ENCODE measurements at regions of chr9 and their contacts with region 1.

Region 1: DNA sequence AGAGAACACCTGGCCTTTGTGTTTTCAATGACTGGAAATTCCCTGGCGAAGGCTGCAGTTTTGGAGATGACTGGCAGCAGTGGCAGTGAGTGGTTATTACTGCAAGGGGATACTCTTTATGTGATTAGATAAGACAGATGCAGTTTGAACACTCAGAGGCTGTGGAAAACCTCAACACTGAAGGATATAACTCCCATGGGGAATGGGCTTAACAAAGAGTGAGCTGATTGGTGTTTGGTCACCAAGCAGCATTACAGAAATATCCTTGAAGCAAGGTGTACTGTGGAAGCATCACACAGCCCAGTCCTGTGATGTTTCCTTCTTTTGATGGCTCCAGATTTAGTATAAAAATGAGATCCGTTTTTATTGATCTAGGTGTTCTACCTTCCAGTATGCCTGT is 490.7 kb upstream of the PTPRD start:
- DNase-seq: no peak
- ATAC-seq: no peak
- H3K4me3 ChIP-seq: no peak overlapping the region
- H3K27ac ChIP-seq: no peak overlapping the region
- H3K4me1 ChIP-seq: no peaks in the 10 kb centered on the region
- H3K27me3 ChIP-seq: no peaks in the 10 kb centered on the region

Region 2: GRCh38 chr9:11092974-11093373 is 10.6 kb before region 1 on chr9:
- intact Hi-C with region 1: loop called in 1 of 2 experiments (anchors 1 kb)
- DNase-seq: no peak
- ATAC-seq: no peak
- H3K4me3 ChIP-seq: no peak overlapping the region
- H3K27ac ChIP-seq: no peak overlapping the region
- H3K4me1 ChIP-seq: no peaks in the 10 kb centered on the region
- H3K27me3 ChIP-seq: no peaks in the 10 kb centered on the region

Region 3: DNA sequence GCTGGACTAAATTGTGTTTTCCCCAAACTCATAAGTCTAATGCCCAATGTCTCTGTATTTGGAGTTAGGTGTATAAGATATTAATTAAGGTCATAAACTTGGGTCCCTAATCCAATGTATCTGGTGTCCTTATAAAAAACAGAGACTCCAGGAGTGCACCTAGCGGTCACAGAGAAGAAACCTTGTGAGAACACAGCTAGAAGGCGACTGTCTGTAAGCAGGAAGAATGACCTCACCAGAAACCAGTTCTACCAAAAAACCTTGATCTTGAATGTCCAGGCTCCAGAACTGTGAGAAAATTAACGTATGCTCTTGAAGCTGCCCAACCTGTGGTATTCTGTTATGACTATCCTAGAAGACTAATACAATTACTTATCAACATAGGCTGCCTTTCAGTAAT is 101.0 kb after region 1 on chr9:
- intact Hi-C with region 1: no loop called
- DNase-seq: no peak
- ATAC-seq: no peak
- H3K4me3 ChIP-seq: no peak overlapping the region
- H3K27ac ChIP-seq: no peak overlapping the region
- H3K4me1 ChIP-seq: no peaks in the 10 kb centered on the region
- H3K27me3 ChIP-seq: no peaks in the 10 kb centered on the region

Region 4: GRCh38 chr9:11537566-11537965 is 434.0 kb after region 1 on chr9:
- intact Hi-C with region 1: no loop called
- DNase-seq: no peak
- ATAC-seq: no peak
- H3K4me3 ChIP-seq: no peak overlapping the region
- H3K27ac ChIP-seq: no peak overlapping the region
- H3K4me1 ChIP-seq: no peaks in the 10 kb centered on the region
- H3K27me3 ChIP-seq: no peaks in the 10 kb centered on the region